ENCODE measurements at regions of chr12 and their contacts with region 1.

Region 1: DNA sequence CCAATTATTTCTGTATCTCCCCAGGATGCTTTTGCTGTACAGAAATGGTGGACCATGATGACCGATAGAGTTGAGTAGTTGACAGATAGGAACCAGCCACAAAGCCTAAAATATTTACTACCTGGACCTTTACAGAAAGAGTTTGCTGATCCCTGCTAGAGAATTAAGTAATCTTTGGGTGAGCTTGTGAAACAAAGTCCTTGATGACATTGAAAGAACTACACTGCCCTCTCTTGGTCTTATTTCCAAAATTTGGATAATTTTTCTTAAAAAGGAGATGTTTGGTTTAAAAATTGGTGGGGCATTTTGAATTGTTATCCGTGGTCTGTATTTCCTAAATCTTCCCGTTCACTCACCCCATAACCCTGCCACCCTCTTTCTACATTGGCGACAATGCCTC is 13.7 kb upstream of the TCTN1 start:
- DNase-seq: no peak
- H3K4me3 ChIP-seq: no peak overlapping the region
- CTCF ChIP-seq: peak; percentile 5

Region 2: GRCh38 chr12:110449799-110450497 is 150.3 kb before region 1 on chr12 and contains the start of gene ARPC3:
- CTCF ChIA-PET with region 1: interaction called, 195 read pairs
- POLR2A ChIA-PET with region 1: no interaction called
- DNase-seq: peak; percentile 42
- H3K4me3 ChIP-seq: peak within 1 kb of the TSS; percentile 95
- CTCF ChIP-seq: peak; percentile 92

Region 3: DNA sequence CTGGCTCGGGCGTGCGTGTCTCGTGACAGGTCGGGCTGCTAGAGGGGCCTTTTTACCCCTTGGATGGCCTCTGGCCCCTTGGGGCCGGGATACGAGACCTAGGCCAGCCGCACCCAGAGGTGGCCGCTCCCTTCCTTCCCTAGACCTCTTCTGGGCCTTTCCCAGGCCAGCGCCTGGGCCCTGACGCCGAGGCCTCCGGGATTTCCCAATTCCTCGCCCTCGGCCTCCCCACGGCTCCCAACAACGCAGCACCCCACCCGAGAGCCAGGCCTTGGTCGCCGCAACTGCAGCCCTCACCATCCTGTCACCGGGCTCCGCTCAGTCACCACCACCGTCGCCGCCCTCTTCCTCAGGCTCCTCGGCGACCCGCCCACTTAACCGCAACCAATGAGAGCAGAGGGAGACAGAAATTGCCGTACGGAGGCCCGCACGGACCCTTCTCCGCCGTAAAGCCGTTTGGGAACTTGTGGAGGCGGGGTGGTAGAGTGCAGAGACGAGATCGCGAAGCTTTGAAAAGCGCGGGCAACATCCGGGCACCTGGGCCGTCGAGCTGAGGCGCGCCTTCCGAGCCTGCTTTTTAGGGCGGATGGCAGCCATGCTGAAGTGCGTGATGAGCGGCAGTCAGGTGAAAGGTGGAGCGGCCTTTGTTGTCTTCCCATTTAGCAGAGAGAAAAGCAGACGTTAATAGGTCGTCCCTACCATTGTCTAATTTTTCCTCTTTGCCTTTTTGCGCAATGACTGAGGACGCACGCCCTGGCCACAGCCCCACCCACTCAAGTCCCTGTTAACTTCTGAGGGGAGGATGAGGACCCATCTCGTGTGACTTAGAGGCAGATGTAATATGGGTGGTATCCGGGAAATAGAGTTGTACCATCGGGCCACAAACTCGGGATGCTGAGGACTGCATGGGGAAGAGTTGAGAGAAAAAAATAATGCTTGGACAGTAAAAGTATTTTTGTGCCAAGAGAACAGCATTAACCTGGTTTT is 98.2 kb before region 1 on chr12 and contains the starts of genes RAD9B and VPS29:
- CTCF ChIA-PET with region 1: interaction called, 671 read pairs
- POLR2A ChIA-PET with region 1: no interaction called
- DNase-seq: peak; percentile 89
- H3K4me3 ChIP-seq: peak within 1 kb of the TSS; percentile 96
- CTCF ChIP-seq: no peak

Region 4: GRCh38 chr12:110565919-110566871 is 34.1 kb before region 1 on chr12:
- CTCF ChIA-PET with region 1: interaction called, 18 read pairs
- POLR2A ChIA-PET with region 1: no interaction called
- DNase-seq: no peak
- H3K4me3 ChIP-seq: no peak overlapping the region
- CTCF ChIP-seq: no peak

Region 5: DNA sequence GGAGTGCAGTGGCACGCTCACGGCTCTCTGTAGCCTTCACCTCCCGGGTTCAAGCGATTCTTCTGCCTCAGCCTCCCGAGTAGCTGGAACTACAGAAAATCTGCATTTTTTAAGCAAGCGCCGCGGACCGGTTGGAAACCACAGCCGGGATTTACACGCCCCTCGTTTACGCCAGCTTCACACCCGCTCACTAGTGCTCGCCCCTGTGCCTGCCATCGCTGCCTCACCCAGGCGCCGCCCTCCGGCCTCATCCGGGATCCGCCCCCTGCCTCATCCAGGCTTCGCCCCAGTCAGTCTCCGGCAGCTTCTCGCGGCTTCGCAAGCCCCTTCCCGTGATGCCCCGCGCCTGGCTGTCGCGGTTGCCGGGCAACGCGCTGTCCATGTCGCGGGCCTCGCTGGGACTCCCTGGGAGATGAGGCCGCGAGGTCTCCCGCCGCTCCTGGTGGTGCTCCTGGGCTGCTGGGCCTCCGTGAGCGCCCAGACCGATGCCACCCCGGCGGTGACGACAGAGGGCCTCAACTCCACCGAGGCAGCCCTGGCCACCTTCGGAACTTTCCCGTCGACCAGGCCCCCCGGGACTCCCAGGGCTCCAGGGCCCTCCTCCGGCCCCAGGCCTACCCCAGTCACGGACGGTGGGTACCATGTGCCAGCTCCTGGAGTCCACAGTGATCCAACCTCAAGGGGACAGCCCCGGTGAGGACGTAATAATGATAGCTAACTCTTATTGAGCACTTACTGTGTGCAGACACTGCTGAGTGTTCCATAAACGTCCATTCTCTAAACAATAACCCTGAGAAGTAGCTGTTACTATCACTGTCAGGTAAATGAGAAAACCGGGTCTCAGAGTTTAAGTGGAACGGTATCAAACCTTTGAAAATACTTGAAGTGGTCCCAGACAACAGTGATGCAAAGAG is 13.8 kb after region 1 on chr12 and contains the start of gene TCTN1:
- CTCF ChIA-PET with region 1: interaction called, 88 read pairs
- POLR2A ChIA-PET with region 1: no interaction called
- DNase-seq: peak; percentile 44
- H3K4me3 ChIP-seq: peak within 1 kb of the TSS; percentile 84
- CTCF ChIP-seq: peak; percentile 18

Region 6: DNA sequence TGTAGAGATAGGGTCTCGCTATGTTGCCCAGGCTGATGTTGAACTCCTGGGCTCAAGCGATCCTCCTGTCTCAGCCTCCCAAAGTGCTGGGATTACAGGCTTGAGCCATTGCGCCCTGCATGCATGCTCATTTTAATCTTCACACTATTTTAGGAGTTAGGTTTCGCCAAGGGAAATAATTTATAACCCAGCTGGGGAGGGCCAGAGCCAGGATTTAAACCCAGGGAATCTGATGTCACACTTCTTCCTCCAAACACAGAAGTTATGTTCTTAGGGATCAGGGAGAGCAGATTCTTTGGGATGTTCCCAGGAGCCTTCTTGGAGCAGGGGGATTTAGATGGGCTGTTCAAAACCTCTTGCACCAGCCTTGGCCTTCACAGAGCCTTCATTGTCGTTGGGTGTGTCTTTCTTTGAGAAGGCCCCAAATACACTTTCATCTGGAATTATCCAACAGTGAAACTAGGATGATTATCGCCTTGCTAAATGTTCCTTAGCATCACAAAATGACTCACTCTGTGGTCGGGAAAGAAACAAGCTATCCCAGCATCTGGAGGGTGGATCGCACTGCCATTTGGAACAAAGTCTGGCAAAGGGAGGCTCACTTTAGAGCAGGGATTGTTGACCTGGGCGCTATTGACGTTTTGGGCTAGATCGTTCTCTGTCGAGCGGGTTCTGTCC is 150.7 kb after region 1 on chr12:
- CTCF ChIA-PET with region 1: no interaction called
- POLR2A ChIA-PET with region 1: no interaction called
- DNase-seq: no peak
- H3K4me3 ChIP-seq: no peak overlapping the region
- CTCF ChIP-seq: no peak

Measured in AG04449 (cell line).